ENCODE measurements at regions of chr4 and their contacts with region 1.

Region 1: DNA sequence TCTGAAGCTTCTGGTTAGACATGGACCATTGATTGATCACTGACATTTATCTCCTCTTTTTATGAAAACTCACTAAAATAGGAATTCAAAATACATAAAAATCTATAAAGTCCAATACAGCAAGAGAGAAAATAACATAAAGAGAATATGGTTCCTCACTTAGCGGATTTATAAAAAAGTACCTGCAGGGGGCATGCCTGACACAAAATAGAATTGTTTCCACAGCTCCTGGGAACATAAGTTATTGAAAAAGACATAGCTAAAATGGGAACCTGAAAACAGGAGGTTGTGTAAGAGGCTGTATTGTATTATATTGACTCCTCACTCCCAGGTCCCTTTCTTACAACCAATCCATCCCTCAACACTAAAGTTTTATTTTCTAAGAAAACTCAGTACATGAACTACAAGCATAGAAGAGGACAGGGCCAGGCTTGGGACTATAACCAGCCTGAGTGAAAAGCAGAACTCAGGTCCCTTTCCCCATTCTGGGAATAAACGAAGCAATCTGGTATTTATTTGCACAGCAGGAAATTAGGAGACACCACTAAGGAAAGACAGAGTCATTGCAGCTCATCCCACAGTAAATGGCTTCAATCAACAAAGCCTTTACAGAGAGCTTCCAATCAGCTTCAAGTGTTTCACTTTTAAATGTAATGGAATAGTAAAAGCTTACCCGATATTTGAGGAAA is 121.1 kb upstream of the NDST4 start:
- DNase-seq: peak in 1 of 2 donors; percentile 27
- ATAC-seq: peak in 1 of 3 donors; percentile 52
- H3K4me3 ChIP-seq: no peak overlapping the region
- H3K4me3 Mint-ChIP-seq: no peak overlapping the region
- H3K27ac ChIP-seq: no peak overlapping the region
- H3K27ac Mint-ChIP-seq: no peak overlapping the region
- H3K4me1 ChIP-seq: no peaks in the 10 kb centered on the region
- H3K4me1 Mint-ChIP-seq: peaks cover 6 to 13% of the 10 kb centered on the region in 2 donors
- H3K27me3 ChIP-seq: no peaks in the 10 kb centered on the region
- H3K27me3 Mint-ChIP-seq: no peaks in the 10 kb centered on the region
- CTCF ChIP-seq: peak; percentile 54

Region 2: GRCh38 chr4:115537387-115537786 is 302.8 kb after region 1 on chr4:
- intact Hi-C with region 1: loop called (anchors 5 kb)
- DNase-seq: no peak
- ATAC-seq: no peak
- H3K4me3 ChIP-seq: no peak overlapping the region
- H3K4me3 Mint-ChIP-seq: no peak overlapping the region
- H3K27ac ChIP-seq: no peak overlapping the region
- H3K27ac Mint-ChIP-seq: no peak overlapping the region
- H3K4me1 ChIP-seq: no peaks in the 10 kb centered on the region
- H3K4me1 Mint-ChIP-seq: no peaks in the 10 kb centered on the region
- H3K27me3 ChIP-seq: no peaks in the 10 kb centered on the region
- H3K27me3 Mint-ChIP-seq: no peaks in the 10 kb centered on the region
- CTCF ChIP-seq: no peak

Measured in natural killer cell (primary cell).